HAP-1 (cell line): ENCODE measurements at regions of chr20 and their contacts with region 1.

Region 1: GRCh38 chr20:47886460-47887041 is 101.3 kb upstream of the SULF2 start:
- DNase-seq: no peak
- H3K4me3 ChIP-seq: no peak overlapping the region
- H3K4me1 ChIP-seq: no peaks in the 10 kb centered on the region
- H3K27me3 ChIP-seq: 0 out of 2 replicates have a peak, but pooled peaks cover 3% of the 10 kb centered on the region

Region 2: DNA sequence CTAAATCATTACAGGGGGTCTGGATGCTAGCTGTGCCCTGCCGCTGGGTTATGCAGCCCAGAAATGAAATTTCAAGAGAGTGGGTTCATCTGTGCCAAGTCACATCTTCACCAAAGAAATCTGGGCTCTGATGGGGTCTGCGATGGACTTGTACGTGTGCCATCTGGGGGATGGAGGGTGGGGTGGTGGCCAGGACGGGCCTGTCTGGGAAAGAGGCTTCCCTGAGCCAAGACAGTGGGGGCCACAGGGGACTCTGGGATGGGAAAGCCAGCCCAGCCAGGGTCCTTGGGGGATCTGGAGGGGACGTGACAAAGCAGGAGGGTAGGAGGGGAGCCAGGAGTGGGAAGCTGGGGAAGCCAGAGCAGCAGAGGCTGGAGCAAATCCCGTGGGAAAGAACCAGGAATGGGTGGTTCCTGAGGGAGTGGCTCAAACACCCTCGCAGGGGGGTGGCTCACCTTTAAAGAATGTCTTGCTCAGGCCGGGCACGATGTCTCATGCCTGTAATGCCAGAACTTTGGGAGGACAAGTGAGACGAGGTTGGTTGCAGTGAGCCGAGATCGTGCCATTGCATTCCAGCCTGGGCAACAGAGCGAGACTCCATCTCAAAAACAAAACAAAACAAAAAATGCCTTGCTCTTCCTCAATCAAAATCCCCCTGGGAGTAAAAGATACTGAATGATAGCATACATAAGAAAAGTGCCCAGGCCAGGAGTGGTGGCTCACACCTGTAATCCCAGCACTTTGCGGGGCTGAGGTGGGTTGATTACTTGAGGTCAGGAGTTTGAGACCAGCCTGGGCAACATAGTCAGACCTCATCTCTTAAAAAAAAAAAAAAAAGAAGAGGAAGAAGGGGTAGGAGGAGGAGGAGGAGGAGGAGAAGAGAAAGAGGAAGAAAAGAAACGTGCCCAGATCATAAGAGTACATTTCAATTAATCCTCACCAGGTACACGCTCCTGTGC is 64.8 kb before region 1 on chr20:
- in situ Hi-C with region 1: loop called (anchors 5 kb)
- DNase-seq: no peak
- H3K4me3 ChIP-seq: no peak overlapping the region
- H3K4me1 ChIP-seq: no peaks in the 10 kb centered on the region
- H3K27me3 ChIP-seq: no peaks in the 10 kb centered on the region

Region 3: DNA sequence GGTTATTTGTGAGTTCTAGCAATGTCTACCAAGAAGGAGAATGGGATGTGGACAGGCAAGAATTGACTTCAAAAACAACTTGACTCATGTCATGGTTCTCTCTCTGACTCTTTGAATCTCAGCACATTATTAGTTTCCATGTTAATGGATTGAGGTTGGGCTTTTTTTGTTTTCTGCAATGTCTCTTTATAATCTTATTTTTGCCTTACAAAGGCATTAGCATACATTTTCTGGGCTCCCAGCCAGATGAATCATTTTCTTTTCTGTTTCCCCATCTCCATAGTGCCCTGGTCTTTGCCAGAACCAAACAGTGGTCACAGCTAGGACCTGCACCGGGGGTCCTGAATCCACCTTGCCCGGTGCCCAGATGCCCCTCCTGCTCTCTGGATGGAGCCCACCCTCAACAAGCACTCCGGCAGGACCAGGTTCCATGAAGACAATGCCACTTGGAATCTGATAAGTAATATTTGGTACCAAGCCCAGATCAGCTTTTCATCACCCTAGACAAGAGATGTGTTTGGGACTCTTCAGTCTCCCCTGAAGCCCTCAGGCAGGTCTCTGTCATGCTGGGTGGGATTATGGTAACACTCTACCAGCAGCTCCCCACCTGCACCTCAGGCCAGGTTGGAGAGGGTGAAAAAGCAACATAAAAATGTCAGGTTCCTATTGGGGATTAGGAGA is 165.4 kb after region 1 on chr20:
- in situ Hi-C with region 1: no loop called
- DNase-seq: peak; percentile 86 to 99
- H3K4me3 ChIP-seq: no peak overlapping the region
- H3K4me1 ChIP-seq: peaks cover 17% of the 10 kb centered on the region
- H3K27me3 ChIP-seq: no peaks in the 10 kb centered on the region

Region 4: GRCh38 chr20:48523212-48523941 is 636.8 kb after region 1 on chr20:
- in situ Hi-C with region 1: loop called (anchors 5 kb)
- DNase-seq: peak; percentile 50 to 76
- H3K4me3 ChIP-seq: no peak overlapping the region
- H3K4me1 ChIP-seq: no peaks in the 10 kb centered on the region
- H3K27me3 ChIP-seq: no peaks in the 10 kb centered on the region; the same call in 1 of the 2 replicates